ENCODE measurements at regions of chr17 and their contacts with region 1.

Region 1: GRCh38 chr17:2029911-2030778 is at the start of gene DPH1:
- DNase-seq: peak; percentile 92
- H3K4me3 ChIP-seq: peak within 1 kb of the TSS; percentile 88
- H3K27ac ChIP-seq: peak within 1 kb of the TSS; percentile 26
- H3K4me1 ChIP-seq: peaks cover 30% of the 10 kb centered on the region
- CTCF ChIP-seq: no peak
- total RNA-seq, gene DPH1: 26.5 and 30.4 TPM in 2 replicates

Region 2: GRCh38 chr17:1724506-1725362 is 305.4 kb before region 1 on chr17 and contains the start of gene WDR81:
- CTCF ChIA-PET with region 1: no interaction called
- POLR2A ChIA-PET with region 1: no interaction called
- intact Hi-C with region 1: loop called (anchors 2 kb)
- DNase-seq: peak; percentile 93
- H3K4me3 ChIP-seq: peak within 1 kb of the TSS; percentile 92
- H3K27ac ChIP-seq: peak within 1 kb of the TSS; percentile 61
- H3K4me1 ChIP-seq: peaks cover 43% of the 10 kb centered on the region
- CTCF ChIP-seq: no peak
- total RNA-seq, gene WDR81: 12.2 and 19.1 TPM in 2 replicates

Region 3: DNA sequence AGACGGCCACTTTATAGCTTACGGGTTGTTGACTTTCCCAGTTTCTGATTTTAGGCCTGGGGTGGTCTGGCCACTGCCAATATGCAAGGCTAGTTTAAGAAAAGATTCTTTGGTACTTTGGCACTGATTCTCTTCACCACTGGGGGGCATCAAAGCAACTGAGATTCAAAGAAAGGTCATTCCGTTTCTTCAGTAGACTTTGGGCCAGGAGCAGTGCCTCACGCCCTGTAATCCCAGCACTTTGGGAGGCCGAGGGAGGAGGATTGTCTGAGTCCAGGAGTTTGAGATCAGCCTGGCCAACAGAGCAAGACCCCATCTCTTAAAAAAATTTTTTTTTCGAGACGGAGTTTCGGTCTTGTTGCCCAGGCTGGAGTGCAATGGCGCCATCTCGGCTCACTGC is 147.3 kb before region 1 on chr17:
- CTCF ChIA-PET with region 1: no interaction called
- POLR2A ChIA-PET with region 1: no interaction called
- intact Hi-C with region 1: loop called (anchors 2 kb)
- DNase-seq: peak; percentile 55
- H3K4me3 ChIP-seq: no peak overlapping the region
- H3K27ac ChIP-seq: no peak overlapping the region
- H3K4me1 ChIP-seq: no peaks in the 10 kb centered on the region
- CTCF ChIP-seq: peak; percentile 82

Region 4: DNA sequence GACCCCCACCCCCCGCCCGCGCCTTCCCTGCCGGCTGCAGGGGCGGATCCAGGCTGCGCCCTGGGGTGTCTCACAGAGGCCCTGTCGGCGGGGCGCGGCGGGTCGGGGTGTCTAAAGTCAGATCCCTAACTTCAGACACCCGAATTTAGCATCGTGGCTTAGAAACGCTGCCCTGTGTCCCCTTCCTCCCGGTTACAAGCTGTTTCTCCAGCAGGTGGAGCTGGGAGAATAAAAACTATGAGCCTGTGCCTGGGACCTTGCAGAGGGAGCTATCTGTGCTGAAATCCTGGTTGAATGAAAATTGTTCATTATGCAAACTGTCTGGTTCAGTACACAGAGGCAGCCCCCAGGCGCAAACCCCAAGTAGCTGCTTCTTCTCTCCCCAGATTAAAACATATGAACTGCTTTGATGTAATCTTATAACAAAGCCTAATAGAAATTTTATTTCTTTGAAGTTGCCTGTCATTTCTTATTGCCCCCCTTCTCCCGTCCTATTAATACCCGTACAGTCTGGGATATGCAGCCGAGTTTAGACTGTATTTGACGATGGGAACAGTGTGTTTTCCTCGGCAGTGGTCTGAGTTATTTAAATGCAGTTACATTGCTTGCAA is 121.3 kb before region 1 on chr17:
- CTCF ChIA-PET with region 1: interaction called, 3 read pairs
- POLR2A ChIA-PET with region 1: interaction called, 3 read pairs
- intact Hi-C with region 1: loop called (anchors 1 kb)
- DNase-seq: peak; percentile 79
- H3K4me3 ChIP-seq: peak overlapping the region; percentile 44
- H3K27ac ChIP-seq: no peak overlapping the region
- H3K4me1 ChIP-seq: peaks cover 52% of the 10 kb centered on the region
- CTCF ChIP-seq: peak; percentile 87

Region 5: GRCh38 chr17:1958134-1958881 is 71.8 kb before region 1 on chr17:
- CTCF ChIA-PET with region 1: interaction called, 11 read pairs
- POLR2A ChIA-PET with region 1: no interaction called
- intact Hi-C with region 1: no loop called
- DNase-seq: no peak
- H3K4me3 ChIP-seq: no peak overlapping the region
- H3K27ac ChIP-seq: no peak overlapping the region
- H3K4me1 ChIP-seq: no peaks in the 10 kb centered on the region
- CTCF ChIP-seq: no peak

Region 6: DNA sequence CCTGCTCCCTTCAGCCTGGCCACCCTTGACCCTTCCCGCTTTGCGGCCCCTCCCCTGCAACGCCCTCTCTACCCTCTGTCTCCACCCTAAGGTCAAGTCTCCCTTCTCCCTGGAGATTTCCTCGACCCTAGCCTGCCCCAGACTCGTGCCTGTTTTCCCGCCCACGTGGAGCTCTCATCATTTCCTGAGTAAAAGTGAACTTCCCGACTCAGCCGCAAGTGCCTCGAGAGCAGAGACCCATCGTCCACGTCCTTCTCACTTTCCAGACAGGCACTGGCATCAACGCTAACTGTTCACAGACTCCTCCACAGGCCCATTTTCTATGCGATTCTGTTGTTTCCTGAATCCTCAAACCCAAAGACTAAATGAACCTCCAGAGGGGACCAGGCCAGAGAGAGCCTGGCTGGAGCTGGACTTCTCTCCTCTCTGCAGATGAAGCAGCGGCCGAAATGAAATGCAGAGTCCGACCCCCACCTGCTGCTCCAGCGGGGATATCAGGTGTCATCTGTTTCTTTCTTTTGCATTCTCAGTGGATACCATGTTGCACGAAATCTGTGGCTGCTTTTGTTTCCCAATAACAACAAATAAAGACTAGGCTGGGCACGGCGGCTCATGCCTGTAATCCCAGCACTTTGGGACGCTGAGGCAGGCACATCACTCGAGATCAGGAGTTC is 57.5 kb before region 1 on chr17:
- CTCF ChIA-PET with region 1: no interaction called
- POLR2A ChIA-PET with region 1: no interaction called
- intact Hi-C with region 1: no loop called
- DNase-seq: no peak
- H3K4me3 ChIP-seq: no peak overlapping the region
- H3K27ac ChIP-seq: no peak overlapping the region
- H3K4me1 ChIP-seq: no peaks in the 10 kb centered on the region
- CTCF ChIP-seq: no peak